ENCODE measurements at regions of chr3 and their contacts with region 1.

Region 1: DNA sequence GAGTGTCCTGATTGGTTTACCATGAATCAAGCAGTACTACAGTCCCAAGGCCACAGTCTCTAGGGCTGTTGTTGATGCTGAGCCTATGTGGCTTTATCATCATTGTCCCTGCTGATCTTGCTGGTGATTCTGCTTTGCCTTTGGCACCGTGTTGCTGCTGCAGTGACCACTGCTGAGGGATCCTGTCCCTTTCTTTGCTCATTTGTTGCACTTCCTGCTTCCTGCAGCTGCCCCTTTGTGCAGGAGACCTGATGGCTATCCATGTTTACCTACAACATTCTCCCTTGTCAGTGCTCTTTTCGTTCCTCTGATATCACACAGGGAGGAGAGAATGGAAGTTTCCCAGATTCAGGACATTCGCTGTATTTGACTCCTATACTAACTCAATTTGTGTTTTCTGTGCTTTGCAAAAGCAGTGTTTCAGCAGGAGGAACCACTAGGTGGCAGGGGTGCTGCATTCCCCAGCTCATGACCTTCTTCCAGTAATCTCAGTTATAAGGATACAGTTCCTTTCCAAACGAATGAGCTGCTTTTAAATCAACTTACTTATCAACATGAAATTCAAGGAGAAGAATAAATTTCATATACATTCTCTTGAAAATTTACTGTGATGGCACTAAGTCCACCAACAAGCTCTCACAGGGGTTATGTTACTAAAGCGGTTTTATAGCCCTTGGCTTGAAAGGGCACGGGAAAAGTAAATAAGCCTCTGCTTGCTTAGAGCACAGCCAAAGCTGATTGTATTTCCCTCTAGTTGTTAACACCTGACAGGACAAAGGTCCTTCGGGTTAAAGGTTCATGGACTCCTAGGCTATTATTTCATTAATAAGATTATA is 9.7 kb upstream of the THUMPD3 start:
- DNase-seq: peak; percentile 69
- ATAC-seq: peak; percentile 62
- H3K4me3 Mint-ChIP-seq: no peak overlapping the region
- H3K27ac Mint-ChIP-seq: no peak overlapping the region
- H3K4me1 Mint-ChIP-seq: peaks cover 14% of the 10 kb centered on the region
- H3K27me3 Mint-ChIP-seq: no peaks in the 10 kb centered on the region
- CTCF ChIP-seq: peak; percentile 75

Region 2: GRCh38 chr3:9231006-9231405 is 122.1 kb before region 1 on chr3:
- CTCF ChIA-PET with region 1: no interaction called
- POLR2A ChIA-PET with region 1: no interaction called
- intact Hi-C with region 1: no loop called
- DNase-seq: no peak
- ATAC-seq: no peak
- H3K4me3 Mint-ChIP-seq: no peak overlapping the region
- H3K27ac Mint-ChIP-seq: no peak overlapping the region
- H3K4me1 Mint-ChIP-seq: no peaks in the 10 kb centered on the region
- H3K27me3 Mint-ChIP-seq: no peaks in the 10 kb centered on the region
- CTCF ChIP-seq: no peak

Region 3: DNA sequence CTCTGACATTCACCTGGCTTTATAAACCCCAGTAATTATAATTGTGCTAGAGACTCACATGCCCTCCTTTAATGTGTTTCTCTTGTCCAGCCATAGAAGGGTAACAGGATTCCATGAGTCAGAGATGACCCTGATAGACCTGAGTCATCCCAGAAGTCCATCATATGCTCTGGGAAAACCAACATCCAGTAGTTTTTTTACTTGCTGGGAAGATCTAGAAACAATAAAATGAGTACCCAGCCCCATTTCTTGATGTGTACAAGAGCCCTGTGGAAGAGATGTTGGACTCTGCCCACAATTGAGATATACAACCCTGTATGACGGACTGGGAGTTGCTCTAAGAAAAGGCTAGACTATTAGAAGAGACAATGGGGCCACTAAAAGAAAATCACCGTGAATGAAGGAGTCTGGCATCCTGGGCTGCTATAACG is 12.6 kb before region 1 on chr3:
- CTCF ChIA-PET with region 1: interaction called, 10 read pairs
- POLR2A ChIA-PET with region 1: no interaction called
- intact Hi-C with region 1: no loop called
- DNase-seq: no peak
- ATAC-seq: no peak
- H3K4me3 Mint-ChIP-seq: no peak overlapping the region
- H3K27ac Mint-ChIP-seq: no peak overlapping the region
- H3K4me1 Mint-ChIP-seq: no peaks in the 10 kb centered on the region
- H3K27me3 Mint-ChIP-seq: no peaks in the 10 kb centered on the region
- CTCF ChIP-seq: no peak

Region 4: DNA sequence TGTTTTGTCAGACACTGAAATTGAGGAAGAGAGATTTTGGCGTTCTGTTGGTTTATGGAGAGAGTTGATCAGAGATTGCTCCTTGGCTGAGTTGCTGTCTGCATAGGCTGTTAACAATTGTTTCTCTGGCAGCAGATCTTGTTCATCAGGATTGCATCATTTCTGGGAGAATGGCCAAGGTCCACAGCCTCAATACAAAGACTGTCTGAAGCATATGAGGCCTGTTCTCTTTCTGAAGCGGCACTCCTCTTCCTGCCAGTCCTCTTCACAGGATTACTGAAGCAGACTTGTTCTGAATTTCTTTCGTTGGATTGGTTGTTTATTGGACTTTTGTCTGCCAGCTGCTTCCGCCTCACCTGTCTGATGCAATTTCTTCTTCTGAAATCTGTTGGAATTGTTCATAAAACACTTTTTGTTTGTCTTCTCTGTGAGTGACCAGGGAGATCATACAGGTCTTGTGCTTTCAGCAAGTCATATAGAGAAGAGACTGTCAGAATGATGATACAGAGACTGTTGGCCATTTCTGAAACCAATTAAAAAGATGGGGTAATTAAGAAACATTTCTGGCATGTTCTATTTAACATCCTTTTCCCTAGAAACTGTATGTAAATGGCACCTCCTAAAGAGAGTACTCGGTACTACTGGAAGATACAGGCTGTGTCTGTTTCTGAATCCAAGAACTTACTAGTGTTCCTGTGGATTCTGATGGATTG is 69.7 kb after region 1 on chr3:
- CTCF ChIA-PET with region 1: interaction called, 9 read pairs
- POLR2A ChIA-PET with region 1: no interaction called
- intact Hi-C with region 1: loop called (anchors 10 kb)
- DNase-seq: peak; percentile 27
- ATAC-seq: peak; percentile 78
- H3K4me3 Mint-ChIP-seq: no peak overlapping the region
- H3K27ac Mint-ChIP-seq: peak overlapping the region; percentile 88
- H3K4me1 Mint-ChIP-seq: peaks cover 45% of the 10 kb centered on the region
- H3K27me3 Mint-ChIP-seq: no peaks in the 10 kb centered on the region
- CTCF ChIP-seq: peak; percentile 51

Region 5: GRCh38 chr3:9565316-9565715 is 212.2 kb after region 1 on chr3:
- CTCF ChIA-PET with region 1: no interaction called
- POLR2A ChIA-PET with region 1: no interaction called
- intact Hi-C with region 1: no loop called
- DNase-seq: no peak
- ATAC-seq: no peak
- H3K4me3 Mint-ChIP-seq: no peak overlapping the region
- H3K27ac Mint-ChIP-seq: no peak overlapping the region
- H3K4me1 Mint-ChIP-seq: no peaks in the 10 kb centered on the region
- H3K27me3 Mint-ChIP-seq: peaks cover 9% of the 10 kb centered on the region
- CTCF ChIP-seq: no peak

Region 6: DNA sequence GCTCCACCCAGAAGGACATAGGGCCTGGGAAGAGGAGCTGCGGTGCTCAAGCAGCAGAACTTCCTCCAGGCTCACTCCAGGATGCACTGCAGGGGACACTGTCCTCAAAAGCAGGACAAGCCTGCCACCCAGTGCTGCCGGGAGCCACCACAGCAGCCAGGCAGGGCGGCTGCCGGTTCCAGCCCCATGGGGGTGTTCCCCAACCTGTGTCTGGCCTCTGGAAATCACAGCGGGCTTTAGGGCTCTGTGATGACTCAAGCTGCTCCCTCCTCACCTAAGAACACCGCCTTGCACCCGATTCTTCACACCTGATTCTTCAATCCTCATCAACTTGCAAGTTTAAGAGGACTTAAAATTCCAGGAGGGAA is 1390.9 kb after region 1 on chr3:
- CTCF ChIA-PET with region 1: no interaction called
- POLR2A ChIA-PET with region 1: no interaction called
- intact Hi-C with region 1: no loop called
- DNase-seq: peak; percentile 53
- ATAC-seq: peak; percentile 80
- H3K4me3 Mint-ChIP-seq: no peak overlapping the region
- H3K27ac Mint-ChIP-seq: no peak overlapping the region
- H3K4me1 Mint-ChIP-seq: no peaks in the 10 kb centered on the region
- H3K27me3 Mint-ChIP-seq: peaks cover 13% of the 10 kb centered on the region
- CTCF ChIP-seq: no peak

Measured in activated CD8-positive, alpha-beta T cell treated with anti-CD3 and anti-CD28 coated beads for 36 hours (primary cell).